GM12878 (cell line): ENCODE measurements at regions of chr6 and their contacts with region 1.

Region 1: DNA sequence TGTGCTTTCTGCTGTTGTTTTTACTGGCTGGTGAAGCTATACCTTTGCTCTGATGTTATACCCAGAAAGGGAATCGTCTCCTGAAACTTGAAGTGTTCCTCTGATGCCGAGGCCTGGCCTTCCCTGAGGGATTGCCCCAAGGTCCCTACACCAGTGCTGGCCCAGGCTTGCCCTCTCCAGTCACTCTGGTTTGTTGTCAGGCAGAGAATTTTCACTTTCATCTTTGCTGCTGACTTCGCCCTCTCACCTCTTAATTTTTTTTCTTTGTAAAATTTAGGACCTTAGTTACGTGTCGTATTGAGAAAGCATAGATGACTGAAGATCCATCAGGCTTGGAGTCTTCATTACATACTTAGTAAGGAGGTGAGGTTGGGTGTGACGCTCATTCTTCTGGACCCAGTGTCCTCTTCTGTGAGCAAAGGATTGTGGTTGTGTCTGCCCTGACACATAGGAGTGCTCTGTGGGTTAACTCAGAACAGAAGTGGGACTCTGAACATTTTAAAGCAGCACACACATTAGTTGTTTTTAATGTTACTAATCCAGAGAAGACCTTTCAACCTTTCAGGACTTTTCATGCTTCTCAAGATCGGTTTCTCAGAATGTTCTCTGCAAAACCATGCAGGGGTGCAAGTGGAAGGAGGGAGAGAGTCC is 45.4 kb downstream of the TULP4 start:
- DNase-seq: peak; percentile 62
- ATAC-seq: peak; percentile 90
- H3K4me3 ChIP-seq: peak overlapping the region; percentile 37; the same call in 1 of the 2 replicates
- H3K27ac ChIP-seq: peak overlapping the region; percentile 68
- H3K4me1 ChIP-seq: peaks cover 23% of the 10 kb centered on the region
- H3K27me3 ChIP-seq: no peaks in the 10 kb centered on the region
- CTCF ChIP-seq: no peak
- EP300 ChIP-seq: 0 out of 4 replicates have a peak, but pooled peaks of 1 of the 2 experiments have one; percentile 20
- POLR2A ChIP-seq: no peak
- RAD21 ChIP-seq: no peak

Region 2: DNA sequence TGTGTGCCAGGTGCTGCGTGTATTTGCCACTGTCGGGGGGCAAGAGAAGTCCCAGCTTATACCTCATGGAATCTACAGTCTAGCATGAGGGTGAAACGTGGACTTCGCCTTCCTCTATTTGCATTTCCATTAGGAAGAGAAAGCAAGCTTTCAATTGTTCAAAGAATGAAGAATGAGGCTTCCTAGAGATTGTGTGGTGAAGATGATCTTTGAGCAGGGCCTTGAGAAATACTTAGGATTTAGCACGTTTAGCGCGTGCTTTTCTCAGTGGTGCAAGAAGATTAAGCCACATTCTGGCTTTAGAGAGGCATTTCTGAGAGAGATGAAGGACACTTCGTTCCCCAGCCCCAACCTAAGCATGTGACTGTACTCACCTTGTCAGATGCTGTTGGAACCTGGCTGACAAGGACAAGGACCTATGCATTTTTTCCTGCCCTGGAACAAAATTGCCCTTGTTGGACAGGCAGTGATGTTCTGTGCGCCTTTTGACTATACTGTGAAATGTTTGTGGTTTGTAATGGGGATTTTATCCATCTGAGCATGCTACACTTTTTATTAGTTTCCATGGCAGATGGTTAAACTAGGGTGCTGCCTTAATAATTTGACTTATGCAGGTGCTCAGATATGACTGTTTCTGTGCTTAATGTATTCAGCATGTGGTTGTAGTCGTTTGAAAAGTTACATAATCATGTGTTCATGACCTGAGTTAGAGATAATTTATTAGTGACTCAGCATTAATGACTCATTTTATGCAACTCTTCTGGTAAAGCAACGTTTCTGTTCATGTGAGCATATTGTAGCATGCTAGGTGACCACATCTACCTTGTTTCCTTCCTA is 34.7 kb before region 1 on chr6:
- CTCF ChIA-PET with region 1: interaction called, 4 read pairs
- POLR2A ChIA-PET with region 1: no interaction called
- RAD21 ChIA-PET with region 1: interaction called, 17 read pairs
- SMC1A ChIA-PET with region 1: interaction called, 7 read pairs
- in situ Hi-C with region 1: no loop called
- intact Hi-C with region 1: no loop called
- DNase-seq: peak; percentile 45
- ATAC-seq: peak; percentile 87
- H3K4me3 ChIP-seq: no peak overlapping the region; the same call in 1 of the 2 replicates
- H3K27ac ChIP-seq: peak overlapping the region; percentile 2
- H3K4me1 ChIP-seq: peaks cover 31% of the 10 kb centered on the region
- H3K27me3 ChIP-seq: no peaks in the 10 kb centered on the region
- CTCF ChIP-seq: no peak
- EP300 ChIP-seq: peak in 1 of 2 experiments; percentile 43; a peak in 2 of 4 replicates
- POLR2A ChIP-seq: no peak
- RAD21 ChIP-seq: no peak

Region 3: DNA sequence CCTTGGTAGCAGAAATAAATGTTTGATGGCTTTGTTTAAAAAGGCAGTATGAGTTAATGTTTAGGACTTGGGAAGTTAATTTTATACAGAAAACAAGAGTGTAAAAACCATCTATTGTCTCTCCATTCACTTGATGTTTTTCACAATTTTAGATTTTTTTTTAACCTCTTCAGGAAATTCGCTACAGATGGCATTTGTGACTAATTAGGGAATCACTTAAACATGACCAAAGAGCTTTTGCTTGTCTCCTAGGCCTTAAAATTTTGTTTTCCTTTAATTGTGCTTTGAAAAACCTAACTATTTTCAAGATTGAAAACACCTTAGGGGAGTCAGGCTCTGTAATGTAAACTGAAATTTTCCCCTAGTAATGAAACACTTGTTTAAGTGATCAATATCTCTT is 28.2 kb before region 1 on chr6:
- CTCF ChIA-PET with region 1: interaction called, 3 read pairs
- POLR2A ChIA-PET with region 1: no interaction called
- RAD21 ChIA-PET with region 1: interaction called, 17 read pairs
- SMC1A ChIA-PET with region 1: interaction called, 3 read pairs
- in situ Hi-C with region 1: no loop called
- intact Hi-C with region 1: no loop called
- DNase-seq: no peak
- ATAC-seq: no peak
- H3K4me3 ChIP-seq: no peak overlapping the region
- H3K27ac ChIP-seq: no peak overlapping the region
- H3K4me1 ChIP-seq: peaks cover 17% of the 10 kb centered on the region
- H3K27me3 ChIP-seq: no peaks in the 10 kb centered on the region
- CTCF ChIP-seq: no peak
- EP300 ChIP-seq: no peak
- POLR2A ChIP-seq: no peak
- RAD21 ChIP-seq: no peak

Region 4: GRCh38 chr6:158373214-158373613 is 15.5 kb after region 1 on chr6:
- CTCF ChIA-PET with region 1: interaction called, 6 read pairs
- POLR2A ChIA-PET with region 1: interaction called, 4 read pairs
- RAD21 ChIA-PET with region 1: no interaction called
- SMC1A ChIA-PET with region 1: interaction called, 14 read pairs
- in situ Hi-C with region 1: no loop called
- intact Hi-C with region 1: no loop called
- DNase-seq: no peak
- ATAC-seq: no peak
- H3K4me3 ChIP-seq: no peak overlapping the region
- H3K27ac ChIP-seq: no peak overlapping the region
- H3K4me1 ChIP-seq: no peaks in the 10 kb centered on the region
- H3K27me3 ChIP-seq: no peaks in the 10 kb centered on the region
- CTCF ChIP-seq: no peak
- EP300 ChIP-seq: no peak
- POLR2A ChIP-seq: no peak
- RAD21 ChIP-seq: no peak

Region 5: GRCh38 chr6:158536891-158537798 is 179.5 kb after region 1 on chr6:
- CTCF ChIA-PET with region 1: no interaction called
- POLR2A ChIA-PET with region 1: no interaction called
- RAD21 ChIA-PET with region 1: no interaction called
- SMC1A ChIA-PET with region 1: no interaction called
- in situ Hi-C with region 1: no loop called
- intact Hi-C with region 1: no loop called
- DNase-seq: no peak
- ATAC-seq: no peak; the same call in 1 of the 3 replicates
- H3K4me3 ChIP-seq: no peak overlapping the region
- H3K27ac ChIP-seq: no peak overlapping the region
- H3K4me1 ChIP-seq: no peaks in the 10 kb centered on the region
- H3K27me3 ChIP-seq: peaks cover 0 to 6% of the 10 kb centered on the region in 2 experiments; a peak in 2 of 4 replicates
- CTCF ChIP-seq: no peak
- EP300 ChIP-seq: no peak
- POLR2A ChIP-seq: no peak
- RAD21 ChIP-seq: no peak